ENCODE measurements at regions of chr5 and their contacts with region 1.

Region 1: DNA sequence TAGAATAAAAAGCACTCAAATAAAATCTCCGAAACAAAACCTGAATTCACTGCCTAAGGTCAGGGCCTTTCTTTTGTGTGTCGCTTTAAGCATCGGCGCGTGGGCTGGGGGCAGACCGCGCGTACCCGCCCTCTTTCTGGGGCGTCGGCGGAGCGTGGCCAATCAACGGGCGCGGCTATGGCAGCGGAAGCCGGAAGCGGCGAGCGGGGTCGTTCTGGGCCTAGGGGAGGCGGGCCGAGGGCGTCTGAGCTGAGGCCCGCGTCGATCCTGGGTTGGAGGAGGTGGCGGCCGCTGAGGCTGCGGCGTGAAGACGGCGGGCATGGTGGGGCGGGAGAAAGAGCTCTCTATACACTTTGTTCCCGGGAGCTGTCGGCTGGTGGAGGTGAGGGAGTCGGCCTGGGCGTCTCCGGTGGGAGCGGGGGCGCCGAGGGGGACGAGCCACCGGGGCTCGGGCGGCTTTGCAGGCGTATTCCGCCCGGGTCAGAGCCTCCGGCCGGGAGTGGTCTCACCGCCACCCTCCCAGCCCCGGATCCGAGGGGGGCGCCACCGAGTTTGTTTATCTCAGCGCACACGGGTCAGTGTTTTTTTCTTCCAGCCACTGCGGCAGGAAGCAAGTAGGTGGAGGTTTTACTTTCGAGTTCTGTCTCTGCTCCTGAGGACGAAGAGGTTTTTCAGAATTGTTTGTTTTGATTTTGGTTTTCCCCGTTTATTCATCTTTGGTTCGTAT is at the start of gene MAT2B:
- DNase-seq: peak; percentile 94
- H3K4me3 ChIP-seq: peak within 1 kb of the TSS; percentile 70 to 86
- H3K27ac ChIP-seq: peak within 1 kb of the TSS; percentile 92 to 95
- H3K4me1 ChIP-seq: peaks cover 18 to 26% of the 10 kb centered on the region in 2 experiments
- H3K27me3 ChIP-seq: no peaks in the 10 kb centered on the region
- CTCF ChIP-seq: peak; percentile 63
- EP300 ChIP-seq: no peak
- RAD21 ChIP-seq: no peak
- polyA plus RNA-seq, gene MAT2B: 30.1 and 35.6 TPM in 2 replicates

Region 2: DNA sequence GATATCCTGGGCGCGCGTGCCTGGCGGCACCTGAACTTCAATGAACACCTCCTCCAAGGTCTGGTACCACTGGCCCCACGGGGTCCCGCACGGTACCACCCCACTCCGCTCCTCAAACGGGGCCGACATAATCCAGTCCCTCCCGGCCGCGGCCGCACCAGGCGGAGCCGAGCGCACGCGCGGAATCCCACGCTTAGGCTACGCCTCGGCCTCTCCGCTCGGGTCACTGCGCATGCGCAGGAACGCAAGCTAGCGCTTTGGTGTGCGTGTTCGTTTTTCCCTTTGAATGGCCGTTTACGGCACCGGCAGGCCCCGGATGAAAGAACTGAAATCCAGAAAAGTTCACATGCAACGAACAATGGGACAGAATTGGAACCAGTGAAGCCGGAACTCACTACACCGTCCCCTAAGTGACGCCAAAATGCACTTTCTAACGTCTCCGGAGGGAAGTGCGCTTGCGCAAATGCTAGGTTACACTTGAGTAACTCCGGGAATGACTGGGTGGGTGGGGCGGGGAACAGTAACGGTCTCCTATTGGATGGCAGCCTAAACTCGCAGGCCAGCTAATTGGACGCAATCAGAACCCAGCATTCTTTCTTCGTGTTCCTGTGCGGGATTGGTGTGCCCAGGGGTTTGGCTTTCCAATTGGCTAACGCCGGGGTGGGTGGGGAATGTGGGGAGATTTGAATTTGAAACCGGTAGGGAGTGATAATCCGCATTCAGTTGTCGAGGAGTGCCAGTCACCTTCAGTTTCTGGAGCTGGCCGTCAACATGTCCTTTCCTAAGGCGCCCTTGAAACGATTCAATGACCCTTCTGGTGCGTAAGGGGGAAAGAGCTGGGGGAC is 45.4 kb before region 1 on chr5 and contains the starts of genes HMMR and NUDCD2:
- CTCF ChIA-PET with region 1: interaction called, 5 read pairs
- POLR2A ChIA-PET with region 1: interaction called, 11 read pairs
- DNase-seq: peak; percentile 88
- H3K4me3 ChIP-seq: peak within 1 kb of the TSS; percentile 83 to 90
- H3K27ac ChIP-seq: peak within 1 kb of the TSS; percentile 98 to 99
- H3K4me1 ChIP-seq: peaks cover 12% of the 10 kb centered on the region in 2 experiments; a peak in 3 of 4 replicates
- H3K27me3 ChIP-seq: no peaks in the 10 kb centered on the region
- CTCF ChIP-seq: peak; percentile 46; the same call in 1 of the 2 replicates
- EP300 ChIP-seq: no peak
- RAD21 ChIP-seq: no peak
- polyA plus RNA-seq, gene HMMR: 7.7 and 7.8 TPM in 2 replicates
- polyA plus RNA-seq, gene NUDCD2: 7.8 and 8.6 TPM in 2 replicates

Region 3: GRCh38 chr5:163473635-163474243 is 31.8 kb before region 1 on chr5:
- CTCF ChIA-PET with region 1: interaction called, 17 read pairs
- POLR2A ChIA-PET with region 1: no interaction called
- DNase-seq: no peak
- H3K4me3 ChIP-seq: no peak overlapping the region
- H3K27ac ChIP-seq: no peak overlapping the region
- H3K4me1 ChIP-seq: peaks cover 0 to 7% of the 10 kb centered on the region in 2 experiments; a peak in 3 of 4 replicates
- H3K27me3 ChIP-seq: no peaks in the 10 kb centered on the region
- CTCF ChIP-seq: peak; percentile 64
- EP300 ChIP-seq: no peak
- RAD21 ChIP-seq: peak; percentile 50

Region 4: DNA sequence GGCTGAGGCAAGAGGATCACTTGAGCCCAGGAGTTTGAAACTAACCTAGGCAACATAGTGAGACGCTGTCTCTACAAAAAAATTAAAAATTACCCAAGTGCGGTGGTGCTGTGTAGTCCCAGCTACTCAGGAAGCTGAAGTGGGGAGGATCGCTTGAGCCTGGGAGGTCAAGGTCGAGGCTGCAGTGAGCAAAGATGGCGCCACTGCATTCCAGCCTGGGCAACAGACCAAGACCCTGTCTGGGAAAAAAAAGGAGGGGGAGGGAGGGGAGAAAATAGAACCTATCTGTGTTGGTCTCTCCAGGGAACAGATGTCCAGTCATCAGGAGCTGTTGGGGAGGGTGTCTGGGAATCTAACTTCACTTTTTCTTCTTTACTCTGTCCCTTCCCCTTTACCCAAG is 24.2 kb after region 1 on chr5:
- CTCF ChIA-PET with region 1: no interaction called
- POLR2A ChIA-PET with region 1: no interaction called
- DNase-seq: no peak
- H3K4me3 ChIP-seq: no peak overlapping the region
- H3K27ac ChIP-seq: no peak overlapping the region
- H3K4me1 ChIP-seq: peaks cover 0 to 14% of the 10 kb centered on the region in 2 experiments; a peak in 2 of 4 replicates
- H3K27me3 ChIP-seq: no peaks in the 10 kb centered on the region
- CTCF ChIP-seq: no peak
- EP300 ChIP-seq: no peak
- RAD21 ChIP-seq: no peak

Region 5: GRCh38 chr5:163631856-163632255 is 126.3 kb after region 1 on chr5:
- CTCF ChIA-PET with region 1: no interaction called
- POLR2A ChIA-PET with region 1: no interaction called
- DNase-seq: no peak
- H3K4me3 ChIP-seq: no peak overlapping the region
- H3K27ac ChIP-seq: no peak overlapping the region
- H3K4me1 ChIP-seq: peaks cover 0 to 3% of the 10 kb centered on the region in 2 experiments; a peak in 1 of 4 replicates
- H3K27me3 ChIP-seq: no peaks in the 10 kb centered on the region
- CTCF ChIP-seq: no peak
- EP300 ChIP-seq: no peak
- RAD21 ChIP-seq: no peak